ENCODE measurements at regions of chr3 and their contacts with region 1.

Region 1: DNA sequence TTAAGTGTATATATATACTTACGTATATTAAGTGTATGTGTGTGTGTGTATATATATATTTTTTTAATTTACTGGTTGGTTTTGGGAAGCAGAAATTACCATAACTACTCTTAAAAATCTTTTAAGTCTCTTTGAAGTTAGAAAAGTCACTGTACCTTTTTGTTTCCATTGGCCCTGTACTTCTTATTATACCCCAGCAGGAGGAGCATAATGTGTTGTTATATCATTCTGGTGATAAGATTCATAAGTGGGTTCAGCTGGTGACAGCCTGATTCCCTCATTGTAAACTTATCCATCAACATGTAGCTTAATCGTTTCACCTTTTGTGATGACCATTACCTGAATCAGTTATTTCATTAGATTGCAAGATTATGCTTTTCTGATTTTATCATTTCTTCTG is 30.8 kb downstream of the MLH1 start:
- DNase-seq: no peak
- H3K4me3 ChIP-seq: no peak overlapping the region
- H3K27ac ChIP-seq: no peak overlapping the region
- H3K4me1 ChIP-seq: no peaks in the 10 kb centered on the region
- H3K27me3 ChIP-seq: no peaks in the 10 kb centered on the region
- CTCF ChIP-seq: peak; percentile 37

Region 2: DNA sequence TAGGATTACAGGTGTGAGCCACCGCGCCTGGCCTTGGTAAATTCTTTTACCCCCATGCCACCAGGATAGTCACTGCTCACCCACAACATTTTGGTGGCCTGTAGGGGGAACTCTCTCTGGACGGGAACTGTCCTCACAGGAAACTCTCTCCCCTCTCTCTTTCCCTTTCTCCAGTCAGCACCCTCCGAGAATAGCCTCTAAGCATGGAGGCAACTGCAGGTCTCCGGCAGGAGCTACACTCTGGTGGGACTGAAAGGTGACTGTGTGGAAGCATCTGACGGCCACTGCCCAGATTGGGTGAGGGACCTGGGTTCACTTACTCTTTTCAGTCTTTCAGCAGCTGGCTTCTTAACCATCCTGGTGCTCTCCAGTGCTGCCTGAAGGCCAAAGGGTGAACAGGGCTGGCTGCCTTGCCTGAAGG is 100.6 kb before region 1 on chr3:
- intact Hi-C with region 1: no loop called
- DNase-seq: no peak
- H3K4me3 ChIP-seq: no peak overlapping the region
- H3K27ac ChIP-seq: no peak overlapping the region
- H3K4me1 ChIP-seq: no peaks in the 10 kb centered on the region
- H3K27me3 ChIP-seq: no peaks in the 10 kb centered on the region
- CTCF ChIP-seq: no peak

Region 3: GRCh38 chr3:37218206-37218605 is 194.1 kb after region 1 on chr3:
- intact Hi-C with region 1: loop called (anchors 5 kb)
- DNase-seq: no peak
- H3K4me3 ChIP-seq: no peak overlapping the region
- H3K27ac ChIP-seq: no peak overlapping the region
- H3K4me1 ChIP-seq: no peaks in the 10 kb centered on the region
- H3K27me3 ChIP-seq: no peaks in the 10 kb centered on the region
- CTCF ChIP-seq: no peak